B cell (primary cell): ENCODE measurements at regions of chr18 and their contacts with region 1.

Region 1: DNA sequence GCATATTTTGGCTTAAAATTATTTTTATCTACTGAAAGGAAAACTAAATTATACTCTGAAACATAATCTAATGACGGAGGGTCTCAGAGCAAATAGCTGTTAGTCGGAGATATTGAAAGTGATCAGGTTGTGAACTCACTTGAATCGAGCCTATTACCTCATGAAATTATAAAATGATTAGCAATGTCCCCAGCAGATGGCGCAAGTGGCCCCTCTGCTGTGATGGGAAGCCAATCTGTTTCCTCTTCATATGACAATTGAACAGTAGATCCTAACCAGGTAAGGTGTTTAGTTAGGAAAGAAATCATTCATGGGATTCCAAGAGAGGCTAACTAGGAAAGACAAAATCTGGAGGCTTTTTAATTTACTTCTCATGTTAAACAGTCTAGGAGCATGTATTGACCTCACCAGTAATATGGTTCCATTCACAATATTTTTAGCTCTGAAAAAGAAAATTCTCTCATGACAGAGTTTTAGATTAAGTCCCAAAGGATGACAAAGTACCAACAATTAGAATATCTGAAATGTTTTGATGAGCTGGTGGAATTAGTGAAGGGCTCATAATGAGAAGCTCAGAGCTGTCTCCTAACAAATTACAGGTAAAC is 29.9 kb upstream of the MPPE1 start:
- DNase-seq: peak; percentile 82
- ATAC-seq: peak; percentile 64
- H3K4me3 ChIP-seq: no peak overlapping the region
- H3K4me3 Mint-ChIP-seq: no peak overlapping the region
- H3K27ac ChIP-seq: no peak overlapping the region
- H3K27ac Mint-ChIP-seq: no peak overlapping the region
- H3K4me1 ChIP-seq: no peaks in the 10 kb centered on the region
- H3K4me1 Mint-ChIP-seq: no peaks in the 10 kb centered on the region
- H3K27me3 ChIP-seq: no peaks in the 10 kb centered on the region
- H3K27me3 Mint-ChIP-seq: no peaks in the 10 kb centered on the region
- CTCF ChIP-seq: peak; percentile 86

Region 2: GRCh38 chr18:11733031-11733430 is 204.9 kb before region 1 on chr18:
- CTCF ChIA-PET with region 1: interaction called, 24 read pairs
- POLR2A ChIA-PET with region 1: no interaction called
- intact Hi-C with region 1: loop called (anchors 1 kb)
- DNase-seq: peak; percentile 73
- ATAC-seq: peak; percentile 68
- H3K4me3 ChIP-seq: no peak overlapping the region
- H3K4me3 Mint-ChIP-seq: peak overlapping the region; percentile 26
- H3K27ac ChIP-seq: no peak overlapping the region
- H3K27ac Mint-ChIP-seq: no peak overlapping the region
- H3K4me1 ChIP-seq: peaks cover 0 to 4% of the 10 kb centered on the region in 2 donors
- H3K4me1 Mint-ChIP-seq: peaks cover 3% of the 10 kb centered on the region
- H3K27me3 ChIP-seq: peaks cover 0 to 10% (median 2%) of the 10 kb centered on the region in 4 experiments
- H3K27me3 Mint-ChIP-seq: peaks cover 46% of the 10 kb centered on the region
- CTCF ChIP-seq: peak; percentile 92

Region 3: DNA sequence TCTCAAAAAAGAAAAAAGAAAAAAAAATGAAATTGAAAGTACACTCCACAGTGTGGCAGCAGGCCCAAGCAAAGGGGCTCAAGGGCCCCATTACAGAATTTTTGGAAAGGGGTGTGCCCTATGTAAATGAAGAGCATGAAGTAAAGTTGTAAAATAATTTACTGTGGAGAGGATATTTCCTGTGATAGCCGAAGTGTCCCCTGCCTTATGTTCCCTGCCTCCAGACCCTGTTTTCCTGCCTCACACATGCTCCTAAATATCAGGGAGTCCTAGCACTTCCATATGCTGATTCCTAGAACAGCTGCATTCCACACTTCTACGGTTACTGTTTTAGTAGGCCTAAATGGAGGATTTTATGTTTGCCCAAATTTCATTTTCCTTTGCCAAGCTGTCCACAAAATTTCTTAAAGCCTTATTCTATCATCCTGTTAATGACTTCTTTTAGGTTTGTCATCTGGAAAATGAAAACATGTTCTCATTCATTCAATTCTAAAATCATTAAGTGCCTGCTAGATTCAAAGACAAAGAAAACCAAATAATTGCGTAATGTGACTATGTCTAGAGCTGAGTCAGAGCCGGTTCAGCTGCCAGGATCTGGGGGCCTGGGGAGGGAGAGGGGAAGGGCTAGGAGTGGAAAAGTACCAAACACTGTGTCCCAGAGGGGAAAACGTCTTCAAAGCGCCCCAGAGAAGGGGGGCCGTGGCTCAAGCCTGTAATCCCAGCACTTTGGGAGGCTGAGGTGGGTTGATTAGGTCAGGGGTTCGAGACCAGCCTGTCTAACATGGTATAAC is 17.5 kb after region 1 on chr18:
- CTCF ChIA-PET with region 1: interaction called, 40 read pairs
- POLR2A ChIA-PET with region 1: no interaction called
- intact Hi-C with region 1: no loop called
- DNase-seq: no peak
- ATAC-seq: no peak
- H3K4me3 ChIP-seq: no peak overlapping the region
- H3K4me3 Mint-ChIP-seq: no peak overlapping the region
- H3K27ac ChIP-seq: no peak overlapping the region
- H3K27ac Mint-ChIP-seq: no peak overlapping the region
- H3K4me1 ChIP-seq: no peaks in the 10 kb centered on the region
- H3K4me1 Mint-ChIP-seq: no peaks in the 10 kb centered on the region
- H3K27me3 ChIP-seq: no peaks in the 10 kb centered on the region
- H3K27me3 Mint-ChIP-seq: peaks cover 4% of the 10 kb centered on the region
- CTCF ChIP-seq: no peak

Region 4: DNA sequence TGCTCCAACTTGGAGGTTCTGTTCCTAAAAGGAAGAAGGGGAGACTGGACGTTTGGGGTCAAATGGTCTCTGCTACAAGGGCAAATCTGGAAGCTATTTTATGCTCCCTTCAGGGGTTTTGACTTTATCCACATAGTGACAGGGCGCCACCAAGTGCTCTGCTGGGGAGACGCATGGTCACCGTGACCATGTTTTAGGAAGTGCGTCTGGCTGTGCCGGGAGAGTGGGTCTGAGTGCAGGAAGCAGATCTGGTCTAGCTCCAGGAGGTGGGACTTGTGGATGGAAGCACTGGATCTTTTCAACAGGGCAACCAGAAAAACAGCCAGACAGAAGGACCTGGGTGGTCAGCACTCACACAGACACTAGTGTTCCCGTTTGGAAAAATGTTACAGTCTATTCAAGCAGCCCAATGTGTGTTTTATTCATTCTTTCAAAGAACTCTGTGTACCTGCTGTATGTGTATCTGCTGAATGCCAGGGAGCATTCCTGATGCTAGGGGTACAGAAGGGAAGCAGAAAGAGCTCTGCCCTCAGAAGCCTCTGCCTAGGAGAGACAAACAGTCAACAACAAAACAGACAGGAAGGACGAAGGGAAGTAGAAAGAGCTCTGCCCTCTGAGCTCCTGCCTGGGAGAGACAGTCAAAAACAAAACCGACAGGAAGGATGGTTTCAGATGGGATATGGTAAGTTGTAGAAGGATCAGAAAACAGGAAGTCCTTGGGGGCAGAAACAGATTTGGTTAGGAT is 57.6 kb after region 1 on chr18:
- CTCF ChIA-PET with region 1: interaction called, 390 read pairs
- POLR2A ChIA-PET with region 1: interaction called, 4 read pairs
- intact Hi-C with region 1: loop called (anchors 1 kb)
- DNase-seq: peak; percentile 74
- ATAC-seq: peak; percentile 86
- H3K4me3 ChIP-seq: no peak overlapping the region
- H3K4me3 Mint-ChIP-seq: peak overlapping the region; percentile 59
- H3K27ac ChIP-seq: no peak overlapping the region
- H3K27ac Mint-ChIP-seq: no peak overlapping the region
- H3K4me1 ChIP-seq: peaks cover 7 to 11% of the 10 kb centered on the region in 2 donors
- H3K4me1 Mint-ChIP-seq: peaks cover 12% of the 10 kb centered on the region
- H3K27me3 ChIP-seq: no peaks in the 10 kb centered on the region
- H3K27me3 Mint-ChIP-seq: no peaks in the 10 kb centered on the region
- CTCF ChIP-seq: peak; percentile 70

Region 5: GRCh38 chr18:12038639-12039417 is 100.9 kb after region 1 on chr18:
- CTCF ChIA-PET with region 1: interaction called, 201 read pairs
- POLR2A ChIA-PET with region 1: no interaction called
- intact Hi-C with region 1: loop called (anchors 1 kb)
- DNase-seq: peak; percentile 85
- ATAC-seq: peak; percentile 97
- H3K4me3 ChIP-seq: peak overlapping the region in 4 of 5 experiments; percentile 49 to 67 (median 56)
- H3K4me3 Mint-ChIP-seq: peak overlapping the region; percentile 82
- H3K27ac ChIP-seq: no peak overlapping the region
- H3K27ac Mint-ChIP-seq: no peak overlapping the region
- H3K4me1 ChIP-seq: peaks cover 15 to 20% of the 10 kb centered on the region in 2 donors
- H3K4me1 Mint-ChIP-seq: peaks cover 24% of the 10 kb centered on the region
- H3K27me3 ChIP-seq: peaks cover 0 to 13% (median 2%) of the 10 kb centered on the region in 4 experiments
- H3K27me3 Mint-ChIP-seq: peaks cover 3% of the 10 kb centered on the region
- CTCF ChIP-seq: peak; percentile 99

Region 6: GRCh38 chr18:12657684-12658425 is 719.9 kb after region 1 on chr18 and contains the start of gene SPIRE1:
- CTCF ChIA-PET with region 1: no interaction called
- POLR2A ChIA-PET with region 1: no interaction called
- intact Hi-C with region 1: loop called (anchors 5 kb)
- DNase-seq: peak; percentile 71
- ATAC-seq: peak; percentile 77
- H3K4me3 ChIP-seq: peak within 1 kb of the TSS in 4 of 5 experiments; percentile 32 to 67 (median 58)
- H3K4me3 Mint-ChIP-seq: peak within 1 kb of the TSS; percentile 94
- H3K27ac ChIP-seq: no peak within 1 kb of the TSS
- H3K27ac Mint-ChIP-seq: no peak within 1 kb of the TSS
- H3K4me1 ChIP-seq: peaks cover 9 to 11% of the 10 kb centered on the region in 2 donors
- H3K4me1 Mint-ChIP-seq: peaks cover 11% of the 10 kb centered on the region
- H3K27me3 ChIP-seq: peaks cover 0 to 34% (median 5%) of the 10 kb centered on the region in 4 experiments
- H3K27me3 Mint-ChIP-seq: peaks cover 26% of the 10 kb centered on the region
- CTCF ChIP-seq: no peak
- total RNA-seq, gene SPIRE1: 3.0 and 4.0 TPM in 2 replicates